ENCODE measurements at regions of chr10 and their contacts with region 1.

Region 1: DNA sequence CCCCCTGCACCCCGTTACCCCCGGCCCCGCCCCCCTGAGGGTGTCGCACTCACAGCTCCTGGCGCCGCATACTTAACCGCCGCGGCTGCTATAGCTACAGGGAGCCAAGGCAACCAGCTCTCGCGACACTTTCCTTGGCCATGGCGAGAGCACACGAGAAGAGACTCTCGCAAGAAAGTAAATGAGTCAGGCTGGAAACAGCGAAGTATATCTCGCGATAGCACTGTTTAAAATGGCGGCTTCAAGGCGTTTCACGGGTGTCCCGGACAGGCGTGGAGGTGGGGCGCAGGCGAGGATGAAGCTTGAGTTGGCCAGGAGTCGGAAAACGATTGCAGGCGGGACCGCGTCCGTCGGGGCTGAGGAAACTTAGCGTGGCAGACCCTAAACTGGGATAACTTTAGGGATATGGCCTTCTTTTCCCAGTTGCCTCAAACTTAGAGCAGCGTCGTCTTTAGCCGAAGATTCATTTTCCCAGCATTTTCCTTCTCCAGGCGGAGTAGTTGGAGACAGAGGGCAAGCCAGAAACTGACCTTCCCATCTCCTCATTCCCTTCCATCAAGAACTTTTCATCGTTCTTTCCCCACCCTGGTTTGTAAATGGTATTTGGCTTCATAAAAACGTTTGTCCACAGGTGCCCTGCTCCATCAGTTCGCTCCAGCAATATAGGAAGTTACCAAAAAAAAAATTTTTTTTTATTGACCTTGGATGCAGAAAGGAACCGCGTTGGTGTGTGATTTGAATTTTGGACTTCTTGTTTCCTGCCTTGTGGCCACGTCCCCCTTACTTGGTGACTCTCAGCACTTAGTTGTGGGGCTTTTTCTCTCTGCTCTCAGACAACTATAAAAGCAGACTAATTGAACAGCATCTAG is 15.2 kb downstream of the MYOZ1 start:
- DNase-seq: peak; percentile 92 to 95 (median 93)
- ATAC-seq: peak; percentile 96 to 99 (median 98)
- H3K4me3 ChIP-seq: peak overlapping the region; percentile 62 to 99 (median 84)
- H3K27ac ChIP-seq: peak overlapping the region; percentile 41 to 89 (median 82)
- H3K4me1 ChIP-seq: peaks cover 0 to 18% (median 9%) of the 10 kb centered on the region in 12 donors
- H3K27me3 ChIP-seq: no peaks in the 10 kb centered on the region
- CTCF ChIP-seq: no peak
- POLR2A ChIP-seq: peak in 1 of 2 donors; percentile 51

Region 2: DNA sequence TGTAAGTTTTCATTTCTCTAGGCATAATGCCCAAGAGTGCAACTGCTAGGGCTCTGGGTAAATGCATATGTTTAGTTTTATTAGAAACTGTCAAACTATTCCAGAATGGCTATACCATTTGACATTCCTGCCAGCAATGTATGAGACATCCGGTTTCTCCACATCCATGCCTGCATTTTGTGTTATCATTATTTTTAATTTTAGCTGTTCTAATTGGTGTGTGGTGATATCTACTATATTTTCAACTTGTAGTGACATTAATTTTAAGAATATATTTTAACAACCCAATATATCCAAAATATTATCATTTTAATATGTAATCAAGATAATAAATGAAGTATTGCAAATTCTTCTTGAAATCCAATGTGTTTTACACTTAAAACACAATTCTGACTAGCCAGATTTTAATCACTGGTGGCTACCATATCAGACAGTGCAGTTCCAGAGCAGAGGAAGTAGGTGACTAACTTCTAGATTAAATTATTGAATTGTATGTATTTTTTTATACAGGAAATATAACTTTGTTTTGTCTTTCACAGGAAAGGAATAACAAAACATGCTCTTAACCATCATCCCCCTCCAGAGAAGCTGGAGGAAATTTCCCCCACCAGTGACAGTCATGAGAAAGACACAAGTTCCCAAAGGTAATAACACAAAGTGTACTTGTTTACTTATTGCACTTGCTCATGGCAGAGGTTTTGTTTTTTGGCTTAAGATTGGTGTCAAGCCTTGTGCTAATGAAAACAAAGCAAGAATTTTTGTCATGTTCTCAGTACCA is 451.8 kb before region 1 on chr10:
- intact Hi-C with region 1: no loop called
- DNase-seq: no peak
- ATAC-seq: no peak
- H3K4me3 ChIP-seq: no peak overlapping the region
- H3K27ac ChIP-seq: no peak overlapping the region
- H3K4me1 ChIP-seq: peaks cover 0 to 4% (median 0%) of the 10 kb centered on the region in 12 donors
- H3K27me3 ChIP-seq: no peaks in the 10 kb centered on the region
- CTCF ChIP-seq: no peak
- POLR2A ChIP-seq: no peak

Region 3: GRCh38 chr10:73413528-73414229 is 212.4 kb before region 1 on chr10 and contains the start of gene ANXA7:
- intact Hi-C with region 1: no loop called
- DNase-seq: peak; percentile 95 to 96 (median 96)
- ATAC-seq: peak; percentile 97 to 99 (median 98)
- H3K4me3 ChIP-seq: peak within 1 kb of the TSS; percentile 67 to 99 (median 89)
- H3K27ac ChIP-seq: peak within 1 kb of the TSS; percentile 92 to 98 (median 95)
- H3K4me1 ChIP-seq: peaks cover 0 to 40% (median 23%) of the 10 kb centered on the region in 12 donors
- H3K27me3 ChIP-seq: no peaks in the 10 kb centered on the region
- CTCF ChIP-seq: peak; percentile 10 to 69 (median 37)
- POLR2A ChIP-seq: peak; percentile 20 to 80
- total RNA-seq, gene ANXA7: 100 to 170 (median 126) TPM

Region 4: DNA sequence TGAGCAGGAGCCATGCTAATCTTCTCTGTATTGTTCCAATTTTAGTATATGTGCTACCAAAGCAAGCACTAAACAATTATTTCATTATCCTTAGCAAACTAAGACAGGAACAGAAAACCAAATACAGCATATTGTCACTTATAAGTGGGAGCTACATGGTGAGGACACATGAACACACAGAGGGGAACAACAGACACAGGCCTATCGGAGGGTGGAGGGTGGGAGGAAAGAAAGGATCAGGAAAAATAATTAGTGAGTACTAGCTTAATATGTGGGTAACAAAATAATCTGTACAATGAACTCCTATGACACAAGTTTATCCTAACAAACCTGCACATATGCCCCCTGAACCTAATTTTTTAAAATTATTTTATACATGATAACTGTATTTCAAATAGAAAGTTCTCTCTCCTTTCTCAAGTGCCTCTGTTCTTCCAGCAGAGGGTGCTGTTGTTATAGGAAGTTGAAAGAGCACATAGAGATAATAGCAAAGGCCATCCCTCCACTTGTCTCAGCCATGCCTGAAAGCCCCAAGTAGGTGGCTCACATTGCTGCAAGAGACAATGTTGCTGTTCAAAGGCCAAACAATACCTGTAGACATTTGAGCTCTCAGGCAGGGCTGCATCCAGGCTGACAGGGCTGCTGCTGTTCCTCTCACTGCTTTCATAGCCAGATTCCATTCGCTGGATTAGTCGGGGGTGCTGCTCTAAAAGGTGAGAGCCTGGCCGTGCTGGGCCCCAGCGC is 96.9 kb before region 1 on chr10:
- intact Hi-C with region 1: loop called in 4 of 10 experiments (anchors 5 kb)
- DNase-seq: peak in 2 of 5 donors; percentile 42 to 62
- ATAC-seq: peak; percentile 66 to 91 (median 90)
- H3K4me3 ChIP-seq: no peak overlapping the region
- H3K27ac ChIP-seq: no peak overlapping the region
- H3K4me1 ChIP-seq: peaks cover 0 to 3% (median 0%) of the 10 kb centered on the region in 12 donors
- H3K27me3 ChIP-seq: no peaks in the 10 kb centered on the region
- CTCF ChIP-seq: peak; percentile 73 to 95 (median 87)
- POLR2A ChIP-seq: no peak

Region 5: GRCh38 chr10:73537288-73537687 is 88.8 kb before region 1 on chr10:
- intact Hi-C with region 1: loop called in 2 of 10 experiments (anchors 5 kb)
- DNase-seq: no peak
- ATAC-seq: no peak
- H3K4me3 ChIP-seq: no peak overlapping the region
- H3K27ac ChIP-seq: no peak overlapping the region
- H3K4me1 ChIP-seq: no peaks in the 10 kb centered on the region
- H3K27me3 ChIP-seq: no peaks in the 10 kb centered on the region
- CTCF ChIP-seq: no peak
- POLR2A ChIP-seq: no peak

Region 6: DNA sequence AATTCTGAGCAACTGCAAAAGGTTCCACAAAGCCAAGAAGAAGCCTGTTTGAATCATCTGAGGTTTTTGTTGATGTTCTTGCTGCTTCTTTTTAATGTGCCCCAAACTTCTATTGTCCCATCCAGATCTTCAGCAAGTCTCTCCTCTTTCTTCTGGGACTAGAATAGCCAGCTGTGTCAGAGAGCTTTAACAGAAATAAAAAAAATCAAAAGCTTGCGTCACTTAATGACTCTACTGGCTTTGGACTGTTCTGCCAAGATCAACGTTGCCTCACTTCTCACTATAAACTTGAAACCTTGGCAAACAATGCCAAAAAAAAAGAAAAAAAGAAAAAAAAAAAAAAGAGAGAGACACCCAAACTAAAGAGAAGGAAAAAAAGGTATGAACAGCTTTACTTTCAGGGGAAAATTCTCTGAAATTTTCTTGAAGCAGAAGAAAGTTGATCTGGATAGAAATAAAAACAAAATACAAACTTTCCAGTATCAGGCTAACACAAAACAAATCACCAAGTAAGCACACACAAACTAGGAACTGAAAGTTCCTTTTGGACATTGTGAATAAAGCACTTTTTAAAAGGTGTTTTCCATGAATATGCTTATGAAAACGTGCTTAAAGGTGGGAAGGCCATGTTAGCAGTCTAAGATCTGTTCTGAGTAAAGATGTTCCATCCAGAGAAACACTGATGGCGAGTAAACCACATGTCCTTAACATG is 49.8 kb before region 1 on chr10:
- intact Hi-C with region 1: loop called in 3 of 10 experiments (anchors 5 to 10 kb)
- DNase-seq: peak in 3 of 5 donors; percentile 34 to 38 (median 36)
- ATAC-seq: peak; percentile 71 to 84 (median 76)
- H3K4me3 ChIP-seq: peak overlapping the region in 9 of 12 donors; percentile 20 to 41 (median 31)
- H3K27ac ChIP-seq: peak overlapping the region; percentile 45 to 90 (median 82)
- H3K4me1 ChIP-seq: peaks cover 0 to 44% (median 25%) of the 10 kb centered on the region in 12 donors
- H3K27me3 ChIP-seq: no peaks in the 10 kb centered on the region
- CTCF ChIP-seq: no peak
- POLR2A ChIP-seq: peak in 1 of 2 donors; percentile 62

Region 7: GRCh38 chr10:73586583-73586984 is 39.5 kb before region 1 on chr10:
- intact Hi-C with region 1: loop called in 4 of 10 experiments (anchors 5 kb)
- DNase-seq: no peak
- ATAC-seq: peak in 3 of 4 donors; percentile 73 to 81 (median 78)
- H3K4me3 ChIP-seq: no peak overlapping the region
- H3K27ac ChIP-seq: peak overlapping the region in 11 of 12 donors; percentile 4 to 71 (median 54)
- H3K4me1 ChIP-seq: peaks cover 0 to 52% (median 29%) of the 10 kb centered on the region in 12 donors
- H3K27me3 ChIP-seq: no peaks in the 10 kb centered on the region
- CTCF ChIP-seq: no peak
- POLR2A ChIP-seq: no peak

Region 8: DNA sequence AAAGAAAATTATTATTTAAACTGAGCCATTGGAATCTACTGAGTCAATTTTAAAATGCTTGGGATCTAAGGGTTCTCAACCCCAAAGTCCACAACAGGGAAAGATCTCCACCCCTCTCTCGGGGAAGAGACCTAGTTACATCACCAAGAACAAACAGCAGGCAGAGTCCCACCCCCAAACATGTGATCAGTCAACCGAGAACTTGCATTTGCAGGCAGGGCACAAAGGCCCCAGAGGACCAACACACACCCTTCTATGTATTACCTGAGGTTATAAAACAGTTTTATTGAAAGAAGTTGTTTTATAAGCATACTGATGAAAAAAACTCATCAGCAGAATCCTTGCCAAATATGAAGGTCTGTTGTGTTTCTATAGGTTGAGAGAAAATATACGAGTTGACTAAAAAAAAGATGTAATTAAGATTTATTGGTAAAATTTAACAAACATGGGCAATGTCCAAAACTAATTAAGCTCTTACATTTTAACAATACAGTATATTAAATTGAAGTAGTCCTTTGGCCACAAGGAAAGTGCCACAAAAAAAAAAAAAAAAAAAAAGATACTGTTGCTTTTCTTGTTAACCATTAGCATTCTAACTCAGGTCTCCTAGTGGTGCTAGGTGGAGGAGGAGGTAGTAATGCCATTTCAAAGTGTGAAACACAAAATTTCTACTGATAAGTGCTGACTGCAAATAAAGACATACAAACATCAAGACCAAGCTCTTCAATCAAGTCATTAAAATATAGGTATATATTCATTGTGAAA is 34.0 kb before region 1 on chr10:
- intact Hi-C with region 1: loop called in 4 of 10 experiments (anchors 5 kb)
- DNase-seq: peak in 4 of 5 donors; percentile 48 to 70 (median 60)
- ATAC-seq: peak; percentile 87 to 90 (median 87)
- H3K4me3 ChIP-seq: peak overlapping the region in 6 of 12 donors; percentile 9 to 37 (median 20)
- H3K27ac ChIP-seq: peak overlapping the region; percentile 8 to 79 (median 68)
- H3K4me1 ChIP-seq: peaks cover 0 to 37% (median 21%) of the 10 kb centered on the region in 12 donors
- H3K27me3 ChIP-seq: no peaks in the 10 kb centered on the region
- CTCF ChIP-seq: no peak
- POLR2A ChIP-seq: peak in 1 of 2 donors; percentile 32

Measured in heart left ventricle (tissue), 16 donors.